ENCODE measurements at regions of chr6 and their contacts with region 1.

Region 1: GRCh38 chr6:10510592-10511367 is 10.4 kb upstream of the GCNT2 start:
- DNase-seq: peak; percentile 80
- H3K4me3 ChIP-seq: no peak overlapping the region
- H3K4me3 Mint-ChIP-seq: no peak overlapping the region
- H3K27ac Mint-ChIP-seq: peak overlapping the region; percentile 66
- H3K4me1 ChIP-seq: peaks cover 15% of the 10 kb centered on the region
- H3K4me1 Mint-ChIP-seq: peaks cover 22% of the 10 kb centered on the region
- H3K27me3 ChIP-seq: no peaks in the 10 kb centered on the region
- H3K27me3 Mint-ChIP-seq: no peaks in the 10 kb centered on the region
- CTCF ChIP-seq: peak; percentile 56 to 87

Region 2: DNA sequence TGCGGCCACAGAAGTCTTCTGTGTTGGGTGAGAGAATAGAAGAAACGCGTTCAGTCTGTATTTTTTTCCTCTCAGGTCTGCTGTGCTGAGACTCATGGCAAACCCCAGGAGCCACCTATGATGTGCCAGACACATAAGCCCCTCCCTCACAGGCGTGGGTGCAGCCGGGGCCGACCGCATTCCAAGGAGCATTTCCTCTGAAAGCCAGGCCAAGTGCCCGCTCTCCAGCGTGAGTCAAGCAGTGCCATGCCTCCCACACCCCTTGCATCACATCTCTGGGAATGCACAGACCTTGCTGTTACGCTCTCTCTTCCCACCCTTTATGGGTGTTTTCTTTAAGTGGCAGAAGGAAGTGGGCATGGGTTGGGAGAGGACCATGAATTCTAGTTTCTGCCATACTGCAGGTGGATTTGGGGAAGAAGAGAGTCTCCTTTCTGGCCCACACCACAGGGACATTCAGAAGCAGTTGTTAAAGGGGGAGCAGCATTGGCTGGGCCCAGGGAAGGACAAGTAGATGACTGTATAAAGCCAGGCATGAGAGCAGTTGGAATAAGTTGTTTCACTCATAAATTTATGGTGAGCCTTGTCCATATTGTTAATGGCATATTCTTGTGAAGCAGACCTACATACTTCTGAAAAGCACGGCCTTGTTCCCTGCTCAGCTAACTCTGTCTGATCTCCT is 58.8 kb before region 1 on chr6:
- CTCF ChIA-PET with region 1: no interaction called
- POLR2A ChIA-PET with region 1: no interaction called
- intact Hi-C with region 1: no loop called
- DNase-seq: no peak
- H3K4me3 ChIP-seq: no peak overlapping the region
- H3K4me3 Mint-ChIP-seq: no peak overlapping the region
- H3K27ac Mint-ChIP-seq: no peak overlapping the region
- H3K4me1 ChIP-seq: no peaks in the 10 kb centered on the region
- H3K4me1 Mint-ChIP-seq: no peaks in the 10 kb centered on the region
- H3K27me3 ChIP-seq: no peaks in the 10 kb centered on the region
- H3K27me3 Mint-ChIP-seq: no peaks in the 10 kb centered on the region
- CTCF ChIP-seq: no peak

Region 3: GRCh38 chr6:10567256-10568026 is 56.7 kb after region 1 on chr6:
- CTCF ChIA-PET with region 1: no interaction called
- POLR2A ChIA-PET with region 1: no interaction called
- intact Hi-C with region 1: loop called (anchors 2 kb)
- DNase-seq: peak; percentile 78 to 85
- H3K4me3 ChIP-seq: no peak overlapping the region
- H3K4me3 Mint-ChIP-seq: peak overlapping the region; percentile 54
- H3K27ac Mint-ChIP-seq: peak overlapping the region; percentile 88
- H3K4me1 ChIP-seq: peaks cover 56% of the 10 kb centered on the region
- H3K4me1 Mint-ChIP-seq: peaks cover 55% of the 10 kb centered on the region
- H3K27me3 ChIP-seq: no peaks in the 10 kb centered on the region
- H3K27me3 Mint-ChIP-seq: no peaks in the 10 kb centered on the region
- CTCF ChIP-seq: no peak

Region 4: GRCh38 chr6:10582774-10583508 is 72.2 kb after region 1 on chr6:
- CTCF ChIA-PET with region 1: no interaction called
- POLR2A ChIA-PET with region 1: no interaction called
- intact Hi-C with region 1: loop called (anchors 1 kb)
- DNase-seq: no peak
- H3K4me3 ChIP-seq: peak overlapping the region; percentile 11; the same call in 1 of the 2 replicates
- H3K4me3 Mint-ChIP-seq: no peak overlapping the region
- H3K27ac Mint-ChIP-seq: peak overlapping the region; percentile 86
- H3K4me1 ChIP-seq: peaks cover 48% of the 10 kb centered on the region
- H3K4me1 Mint-ChIP-seq: peaks cover 41% of the 10 kb centered on the region
- H3K27me3 ChIP-seq: no peaks in the 10 kb centered on the region
- H3K27me3 Mint-ChIP-seq: no peaks in the 10 kb centered on the region
- CTCF ChIP-seq: no peak

Region 5: GRCh38 chr6:10613066-10613465 is 102.3 kb after region 1 on chr6:
- CTCF ChIA-PET with region 1: no interaction called
- POLR2A ChIA-PET with region 1: no interaction called
- intact Hi-C with region 1: loop called (anchors 2 kb)
- DNase-seq: no peak
- H3K4me3 ChIP-seq: no peak overlapping the region
- H3K4me3 Mint-ChIP-seq: no peak overlapping the region
- H3K27ac Mint-ChIP-seq: no peak overlapping the region
- H3K4me1 ChIP-seq: peaks cover 28% of the 10 kb centered on the region
- H3K4me1 Mint-ChIP-seq: peaks cover 17% of the 10 kb centered on the region
- H3K27me3 ChIP-seq: no peaks in the 10 kb centered on the region
- H3K27me3 Mint-ChIP-seq: no peaks in the 10 kb centered on the region
- CTCF ChIP-seq: no peak

Region 6: DNA sequence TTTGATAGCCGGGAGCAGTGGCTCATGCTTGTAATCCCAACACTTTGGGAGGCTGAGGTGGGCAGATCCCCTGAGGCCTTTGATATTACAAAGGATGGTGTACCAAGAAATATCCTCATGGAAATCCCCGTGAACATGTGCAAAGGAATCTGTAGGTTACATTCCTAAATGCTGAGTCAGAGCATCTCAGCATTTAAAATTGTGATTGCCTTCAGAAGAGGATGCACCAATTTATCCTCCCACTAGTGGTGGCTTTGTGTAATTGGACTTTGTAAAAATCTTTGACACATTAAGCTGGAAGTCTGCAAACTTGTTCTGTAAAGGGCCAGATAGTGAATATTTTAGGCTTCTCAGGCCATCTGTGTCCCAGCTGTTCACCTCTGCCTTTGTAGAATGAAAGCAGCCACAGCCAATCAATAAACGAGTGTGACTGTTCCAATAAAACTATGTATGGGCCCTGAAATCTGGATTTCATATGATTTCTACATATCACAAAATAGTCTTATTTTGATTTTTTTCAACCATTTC is 248.6 kb after region 1 on chr6:
- CTCF ChIA-PET with region 1: no interaction called
- POLR2A ChIA-PET with region 1: no interaction called
- intact Hi-C with region 1: loop called (anchors 1 kb)
- DNase-seq: peak; percentile 46 to 68
- H3K4me3 ChIP-seq: no peak overlapping the region
- H3K4me3 Mint-ChIP-seq: no peak overlapping the region
- H3K27ac Mint-ChIP-seq: peak overlapping the region; percentile 80
- H3K4me1 ChIP-seq: peaks cover 4% of the 10 kb centered on the region; the same call in 1 of the 2 replicates
- H3K4me1 Mint-ChIP-seq: peaks cover 6% of the 10 kb centered on the region
- H3K27me3 ChIP-seq: no peaks in the 10 kb centered on the region
- H3K27me3 Mint-ChIP-seq: no peaks in the 10 kb centered on the region
- CTCF ChIP-seq: peak; percentile 42 to 44

Region 7: GRCh38 chr6:10886691-10887535 is 376.1 kb after region 1 on chr6 and contains the start of gene SYCP2L:
- CTCF ChIA-PET with region 1: no interaction called
- POLR2A ChIA-PET with region 1: no interaction called
- intact Hi-C with region 1: no loop called
- DNase-seq: no peak
- H3K4me3 ChIP-seq: no peak within 1 kb of the TSS
- H3K4me3 Mint-ChIP-seq: no peak within 1 kb of the TSS
- H3K27ac Mint-ChIP-seq: no peak within 1 kb of the TSS
- H3K4me1 ChIP-seq: no peaks in the 10 kb centered on the region
- H3K4me1 Mint-ChIP-seq: no peaks in the 10 kb centered on the region
- H3K27me3 ChIP-seq: no peaks in the 10 kb centered on the region
- H3K27me3 Mint-ChIP-seq: no peaks in the 10 kb centered on the region
- CTCF ChIP-seq: no peak
- total RNA-seq, gene SYCP2L: 0.12 and 0.20 TPM in 2 replicates

Measured in Caco-2 (cell line).